ENCODE measurements at regions of chrX and their contacts with region 1.

Region 1: GRCh38 chrX:49191033-49191871 is 5.1 kb upstream of the PRICKLE3 start:
- DNase-seq: peak; percentile 86 to 95
- ATAC-seq: peak; percentile 89 to 94 (median 92)
- H3K4me3 ChIP-seq: peak overlapping the region; percentile 32 to 87 (median 74)
- H3K27ac ChIP-seq: peak overlapping the region; percentile 61 to 92 (median 90)
- H3K4me1 ChIP-seq: peaks cover 0 to 16% (median 7%) of the 10 kb centered on the region in 9 donors
- H3K27me3 ChIP-seq: no peaks in the 10 kb centered on the region
- CTCF ChIP-seq: no peak

Region 2: DNA sequence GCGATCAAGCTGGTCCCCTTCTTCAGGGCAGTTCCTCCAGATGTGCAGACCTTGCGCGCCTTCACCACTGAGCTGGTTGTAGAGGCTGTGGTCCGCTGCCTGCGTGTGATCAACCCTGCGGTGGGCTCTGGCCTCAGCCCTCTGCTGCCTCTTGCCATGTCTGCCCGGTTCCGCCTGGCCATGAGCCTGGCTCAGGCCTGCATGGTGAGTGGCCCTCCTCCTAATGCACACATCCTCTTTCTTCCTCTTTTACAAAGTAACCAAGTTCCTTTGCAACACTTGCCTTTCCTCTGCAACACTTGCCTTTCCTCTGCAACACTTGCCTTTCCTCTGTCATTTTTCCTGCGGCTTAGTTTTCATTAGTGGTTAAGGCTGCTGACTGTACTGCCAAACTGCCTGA is 45.8 kb after region 1 on chrX:
- intact Hi-C with region 1: loop called in 1 of 10 experiments (anchors 5 kb)
- DNase-seq: no peak
- ATAC-seq: peak in 1 of 8 donors; percentile 34
- H3K4me3 ChIP-seq: no peak overlapping the region
- H3K27ac ChIP-seq: peak overlapping the region in 1 of 10 donors; percentile 91
- H3K4me1 ChIP-seq: peaks cover 0 to 29% (median 0%) of the 10 kb centered on the region in 9 donors
- H3K27me3 ChIP-seq: no peaks in the 10 kb centered on the region
- CTCF ChIP-seq: no peak

Region 3: GRCh38 chrX:49269010-49269767 is 77.9 kb after region 1 on chrX:
- intact Hi-C with region 1: loop called in 3 of 10 experiments (anchors 10 kb)
- DNase-seq: peak; percentile 94 to 98
- ATAC-seq: peak; percentile 93 to 98 (median 96)
- H3K4me3 ChIP-seq: peak overlapping the region in 9 of 10 donors; percentile 67 to 79 (median 73)
- H3K27ac ChIP-seq: peak overlapping the region; percentile 85 to 96 (median 91)
- H3K4me1 ChIP-seq: peaks cover 0 to 41% (median 23%) of the 10 kb centered on the region in 9 donors
- H3K27me3 ChIP-seq: peaks cover 0 to 10% (median 0%) of the 10 kb centered on the region in 7 donors
- CTCF ChIP-seq: no peak

Measured in heart right ventricle (tissue), 16 donors.